Uterus (tissue), 4 donors: ENCODE measurements at regions of chr2 and their contacts with region 1.

Region 1: GRCh38 chr2:238263204-238264071 is 23.6 kb upstream of the HES6 start:
- DNase-seq: peak; percentile 93 to 95
- H3K4me3 ChIP-seq: no peak overlapping the region
- H3K27ac ChIP-seq: peak overlapping the region; percentile 64 to 78
- H3K4me1 ChIP-seq: no peaks in the 10 kb centered on the region
- H3K27me3 ChIP-seq: no peaks in the 10 kb centered on the region
- CTCF ChIP-seq: peak; percentile 76 to 91 (median 86)
- POLR2A ChIP-seq: peak in 1 of 2 donors; percentile 12

Region 2: GRCh38 chr2:237857791-237858190 is 405.6 kb before region 1 on chr2:
- intact Hi-C with region 1: loop called (anchors 2 kb)
- DNase-seq: peak in 1 of 2 donors; percentile 19
- H3K4me3 ChIP-seq: no peak overlapping the region
- H3K27ac ChIP-seq: peak overlapping the region; percentile 98 to 100
- H3K4me1 ChIP-seq: peaks cover 1 to 10% of the 10 kb centered on the region in 2 donors
- H3K27me3 ChIP-seq: no peaks in the 10 kb centered on the region
- CTCF ChIP-seq: no peak
- POLR2A ChIP-seq: no peak

Region 3: DNA sequence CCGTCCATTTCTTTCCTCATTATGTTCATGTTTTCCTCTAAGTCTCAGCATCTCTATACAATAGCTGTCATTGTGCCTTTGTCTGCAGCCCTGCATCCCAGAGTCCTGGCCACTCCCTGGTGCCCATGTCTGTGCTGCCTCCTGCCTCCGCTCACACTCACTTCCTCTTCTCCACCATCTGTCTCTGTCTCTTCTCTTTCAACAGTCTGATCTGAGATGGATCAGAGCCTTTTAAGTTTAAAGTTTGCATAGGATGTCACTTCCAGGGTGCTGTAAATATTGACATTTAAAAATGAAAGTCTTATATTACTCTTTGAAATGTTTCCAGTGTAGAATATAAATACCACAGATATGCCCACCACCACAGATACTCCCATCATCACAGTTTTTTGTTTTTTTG is 253.9 kb before region 1 on chr2:
- intact Hi-C with region 1: no loop called
- DNase-seq: no peak
- H3K4me3 ChIP-seq: no peak overlapping the region
- H3K27ac ChIP-seq: no peak overlapping the region
- H3K4me1 ChIP-seq: no peaks in the 10 kb centered on the region
- H3K27me3 ChIP-seq: no peaks in the 10 kb centered on the region
- CTCF ChIP-seq: no peak
- POLR2A ChIP-seq: no peak

Region 4: DNA sequence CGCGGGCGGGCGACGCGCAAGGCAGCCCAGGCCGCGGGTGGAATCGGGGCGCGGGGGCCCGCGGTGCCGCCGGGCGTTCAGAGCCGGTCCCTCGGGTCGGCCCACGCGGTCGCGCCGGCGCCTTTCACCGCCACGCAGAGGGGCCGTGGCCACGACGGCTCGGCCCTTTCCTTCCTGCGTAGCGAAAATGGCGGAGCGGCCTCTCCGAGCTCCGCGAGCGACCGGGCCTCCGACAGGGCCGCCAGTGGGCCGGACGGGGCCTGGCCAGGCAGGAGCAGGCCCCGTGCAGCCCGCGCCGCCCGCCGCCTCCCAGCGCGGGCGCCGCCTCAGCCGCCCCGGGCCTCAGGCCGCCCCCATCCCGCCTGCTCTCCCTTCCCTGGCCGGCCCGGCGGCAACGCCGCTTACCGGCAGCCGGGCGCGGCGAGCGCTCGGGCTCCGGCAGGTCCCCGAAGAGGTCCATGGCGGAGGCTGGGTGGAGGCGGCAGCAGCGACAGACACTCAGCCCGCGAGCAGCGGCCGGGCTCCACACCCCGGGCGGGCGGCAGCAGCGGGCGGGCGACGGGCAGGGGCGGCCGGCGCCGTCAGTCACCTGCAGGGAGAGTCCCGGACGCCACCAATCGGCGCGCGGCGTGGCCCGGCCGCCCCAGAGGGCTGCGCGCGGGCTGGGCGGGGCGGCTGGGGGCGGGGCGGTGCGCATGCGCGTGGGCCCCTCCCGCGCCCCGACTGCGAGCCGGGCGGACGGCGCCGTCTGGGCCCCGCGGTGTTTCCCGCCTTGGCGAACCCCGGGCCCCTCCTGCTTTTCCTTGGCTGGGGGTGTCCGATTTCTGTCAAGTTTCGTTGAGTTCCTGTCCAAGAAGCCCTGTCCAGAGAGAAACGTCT is 60.1 kb before region 1 on chr2 and contains the start of gene ILKAP:
- intact Hi-C with region 1: loop called (anchors 10 kb)
- DNase-seq: peak; percentile 83 to 86
- H3K4me3 ChIP-seq: peak within 1 kb of the TSS; percentile 37 to 91
- H3K27ac ChIP-seq: peak within 1 kb of the TSS; percentile 85 to 94
- H3K4me1 ChIP-seq: no peaks in the 10 kb centered on the region
- H3K27me3 ChIP-seq: no peaks in the 10 kb centered on the region
- CTCF ChIP-seq: peak in 1 of 4 experiments; percentile 11
- POLR2A ChIP-seq: peak; percentile 78 to 91
- total RNA-seq, gene ILKAP: 9.2 to 78.0 (median 29.1) TPM